HepG2 (cell line): ENCODE measurements at regions of chr12 and their contacts with region 1.

Region 1: DNA sequence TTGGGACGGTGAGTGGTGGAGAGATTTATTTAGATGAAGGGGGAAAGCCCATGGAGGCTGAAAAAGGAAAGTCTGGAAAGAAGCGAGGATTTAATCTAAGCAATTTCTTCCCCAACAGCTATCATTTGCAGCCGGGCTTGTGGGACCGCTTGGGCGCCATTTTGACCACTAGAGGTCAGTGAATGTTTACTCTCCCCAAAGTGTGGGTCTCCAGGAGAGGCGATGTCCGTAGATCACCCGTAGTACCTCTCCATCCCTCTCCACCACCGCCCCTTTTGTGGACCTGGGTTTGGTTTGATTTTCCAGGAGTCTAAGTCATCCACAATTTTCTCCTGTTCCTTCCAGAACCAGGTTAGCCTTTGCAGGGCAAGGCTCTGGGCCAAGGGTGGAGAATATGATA is 91.2 kb upstream of the PARP11 start:
- DNase-seq: peak; percentile 18
- ATAC-seq: peak; percentile 63
- H3K4me3 ChIP-seq: no peak overlapping the region
- H3K27ac ChIP-seq: no peak overlapping the region
- H3K4me1 ChIP-seq: peaks cover 42% of the 10 kb centered on the region
- H3K27me3 ChIP-seq: no peaks in the 10 kb centered on the region
- CTCF ChIP-seq: peak; percentile 74
- EP300 ChIP-seq: no peak
- POLR2A ChIP-seq: no peak
- RAD21 ChIP-seq: peak; percentile 65

Region 2: GRCh38 chr12:3998968-3999826 is 34.8 kb after region 1 on chr12:
- CTCF ChIA-PET with region 1: no interaction called
- POLR2A ChIA-PET with region 1: no interaction called
- in situ Hi-C with region 1: no loop called
- intact Hi-C with region 1: loop called (anchors 5 kb)
- DNase-seq: peak; percentile 88
- ATAC-seq: peak; percentile 86
- H3K4me3 ChIP-seq: no peak overlapping the region; a peak in 1 of 6 replicates
- H3K27ac ChIP-seq: peak overlapping the region; percentile 89
- H3K4me1 ChIP-seq: peaks cover 52% of the 10 kb centered on the region
- H3K27me3 ChIP-seq: no peaks in the 10 kb centered on the region
- CTCF ChIP-seq: no peak
- EP300 ChIP-seq: peak; percentile 53 to 67; a peak in 2 of 4 replicates
- POLR2A ChIP-seq: 0 out of 4 replicates have a peak, but pooled peaks of 1 of the 2 experiments have one; percentile 27
- RAD21 ChIP-seq: no peak

Region 3: GRCh38 chr12:4044736-4045730 is 80.6 kb after region 1 on chr12:
- CTCF ChIA-PET with region 1: no interaction called
- POLR2A ChIA-PET with region 1: no interaction called
- in situ Hi-C with region 1: no loop called
- intact Hi-C with region 1: no loop called
- DNase-seq: no peak
- ATAC-seq: no peak
- H3K4me3 ChIP-seq: no peak overlapping the region
- H3K27ac ChIP-seq: no peak overlapping the region
- H3K4me1 ChIP-seq: no peaks in the 10 kb centered on the region
- H3K27me3 ChIP-seq: no peaks in the 10 kb centered on the region
- CTCF ChIP-seq: no peak
- EP300 ChIP-seq: no peak
- POLR2A ChIP-seq: no peak
- RAD21 ChIP-seq: no peak